ENCODE measurements at regions of chr11 and their contacts with region 1.

Region 1: DNA sequence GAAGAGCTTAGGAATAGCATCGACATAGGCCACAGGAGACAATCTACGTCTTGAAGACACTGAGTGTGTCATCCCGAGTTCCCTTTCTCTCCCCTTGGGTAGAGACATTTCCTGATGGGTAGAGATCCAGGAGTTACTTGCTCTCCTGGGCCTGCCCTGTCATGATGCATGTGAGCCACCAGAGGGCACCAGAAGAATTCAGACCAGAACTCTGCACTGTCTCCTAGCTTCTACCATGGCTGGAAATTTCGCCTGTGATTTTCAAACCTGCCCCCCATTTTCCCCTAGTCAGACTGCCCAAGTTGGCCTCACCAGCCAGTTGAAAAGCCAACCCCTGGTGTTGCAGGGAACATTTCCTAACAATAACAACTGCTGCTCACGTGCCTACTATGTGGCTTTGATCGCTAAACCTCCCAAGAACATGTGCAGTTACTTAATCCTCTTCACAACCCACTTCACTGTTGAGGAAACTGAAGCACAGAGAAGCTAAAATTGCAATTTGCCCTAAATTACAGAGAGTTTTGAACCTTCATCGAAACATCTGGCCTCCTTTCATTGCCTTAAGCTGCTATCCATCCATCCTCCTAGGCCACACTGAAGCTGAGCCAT is 47.2 kb downstream of the C11orf58 start:
- DNase-seq: peak in 4 of 5 donors; percentile 36 to 45 (median 44)
- H3K4me3 ChIP-seq: no peak overlapping the region
- H3K4me3 Mint-ChIP-seq: no peak overlapping the region
- H3K27ac ChIP-seq: no peak overlapping the region
- H3K27ac Mint-ChIP-seq: peak overlapping the region in 2 of 7 donors; percentile 3
- H3K4me1 ChIP-seq: no peaks in the 10 kb centered on the region
- H3K4me1 Mint-ChIP-seq: peaks cover 0 to 3% (median 0%) of the 10 kb centered on the region in 4 donors
- H3K27me3 ChIP-seq: no peaks in the 10 kb centered on the region
- H3K27me3 Mint-ChIP-seq: no peaks in the 10 kb centered on the region

Region 2: GRCh38 chr11:16286095-16286494 is 499.5 kb before region 1 on chr11:
- CTCF ChIA-PET with region 1: no interaction called
- POLR2A ChIA-PET with region 1: no interaction called
- intact Hi-C with region 1: no loop called
- DNase-seq: no peak
- H3K4me3 ChIP-seq: no peak overlapping the region
- H3K4me3 Mint-ChIP-seq: no peak overlapping the region
- H3K27ac ChIP-seq: no peak overlapping the region
- H3K27ac Mint-ChIP-seq: no peak overlapping the region
- H3K4me1 ChIP-seq: no peaks in the 10 kb centered on the region
- H3K4me1 Mint-ChIP-seq: no peaks in the 10 kb centered on the region
- H3K27me3 ChIP-seq: no peaks in the 10 kb centered on the region
- H3K27me3 Mint-ChIP-seq: no peaks in the 10 kb centered on the region

Region 3: GRCh38 chr11:16722581-16723344 is 62.9 kb before region 1 on chr11:
- CTCF ChIA-PET with region 1: no interaction called
- POLR2A ChIA-PET with region 1: no interaction called
- intact Hi-C with region 1: no loop called
- DNase-seq: no peak
- H3K4me3 ChIP-seq: no peak overlapping the region
- H3K4me3 Mint-ChIP-seq: no peak overlapping the region
- H3K27ac ChIP-seq: no peak overlapping the region
- H3K27ac Mint-ChIP-seq: no peak overlapping the region
- H3K4me1 ChIP-seq: no peaks in the 10 kb centered on the region
- H3K4me1 Mint-ChIP-seq: no peaks in the 10 kb centered on the region
- H3K27me3 ChIP-seq: no peaks in the 10 kb centered on the region
- H3K27me3 Mint-ChIP-seq: peaks cover 0 to under 1% of the 10 kb centered on the region in 2 donors

Region 4: GRCh38 chr11:16773981-16774935 is 11.4 kb before region 1 on chr11:
- CTCF ChIA-PET with region 1: interaction called, 16 read pairs
- POLR2A ChIA-PET with region 1: no interaction called
- intact Hi-C with region 1: no loop called
- DNase-seq: no peak
- H3K4me3 ChIP-seq: no peak overlapping the region
- H3K4me3 Mint-ChIP-seq: no peak overlapping the region
- H3K27ac ChIP-seq: no peak overlapping the region
- H3K27ac Mint-ChIP-seq: no peak overlapping the region
- H3K4me1 ChIP-seq: no peaks in the 10 kb centered on the region
- H3K4me1 Mint-ChIP-seq: no peaks in the 10 kb centered on the region
- H3K27me3 ChIP-seq: no peaks in the 10 kb centered on the region
- H3K27me3 Mint-ChIP-seq: no peaks in the 10 kb centered on the region

Region 5: DNA sequence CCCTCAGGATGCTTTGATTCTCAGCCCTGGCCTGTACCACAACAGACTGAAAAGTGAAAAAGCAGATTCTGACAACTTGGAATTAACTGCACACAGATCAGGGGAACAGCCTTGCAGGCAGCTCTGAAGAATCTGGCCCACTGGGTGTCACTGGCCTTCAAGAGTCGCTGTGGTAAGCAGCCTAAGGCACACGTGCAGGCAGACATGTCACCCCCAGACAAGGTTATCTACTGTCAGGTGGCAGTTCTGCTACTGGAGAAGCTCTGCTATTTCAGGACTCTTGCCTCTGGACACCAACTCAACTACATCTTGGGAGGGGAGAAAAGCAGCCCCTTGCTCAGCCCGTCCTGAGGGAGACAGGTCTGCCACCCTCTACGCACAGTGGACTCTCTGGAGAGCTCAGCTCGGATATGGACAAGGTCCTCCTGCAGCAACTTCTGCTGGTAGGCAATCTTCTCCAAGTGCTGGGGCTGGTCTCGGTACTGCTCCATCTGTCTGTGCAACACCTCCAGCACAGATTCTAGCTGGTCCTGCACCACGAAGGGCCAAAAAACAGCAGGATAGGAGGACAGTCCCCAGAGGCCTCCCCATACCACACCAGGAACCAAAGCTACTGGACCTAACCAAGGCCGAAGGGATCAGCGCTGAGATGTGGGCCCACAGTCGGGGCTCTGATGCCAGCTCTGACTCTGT is 15.8 kb after region 1 on chr11:
- CTCF ChIA-PET with region 1: interaction called, 25 read pairs
- POLR2A ChIA-PET with region 1: no interaction called
- intact Hi-C with region 1: no loop called
- DNase-seq: no peak
- H3K4me3 ChIP-seq: no peak overlapping the region
- H3K4me3 Mint-ChIP-seq: no peak overlapping the region
- H3K27ac ChIP-seq: no peak overlapping the region
- H3K27ac Mint-ChIP-seq: peak overlapping the region in 4 of 7 donors; percentile 14 to 77 (median 51)
- H3K4me1 ChIP-seq: peaks cover 16% of the 10 kb centered on the region
- H3K4me1 Mint-ChIP-seq: peaks cover 0 to 32% (median 13%) of the 10 kb centered on the region in 4 donors
- H3K27me3 ChIP-seq: no peaks in the 10 kb centered on the region
- H3K27me3 Mint-ChIP-seq: no peaks in the 10 kb centered on the region

Region 6: GRCh38 chr11:16809886-16810668 is 24.5 kb after region 1 on chr11:
- CTCF ChIA-PET with region 1: interaction called, 55 read pairs
- POLR2A ChIA-PET with region 1: no interaction called
- intact Hi-C with region 1: no loop called
- DNase-seq: no peak
- H3K4me3 ChIP-seq: no peak overlapping the region
- H3K4me3 Mint-ChIP-seq: no peak overlapping the region
- H3K27ac ChIP-seq: no peak overlapping the region
- H3K27ac Mint-ChIP-seq: peak overlapping the region in 2 of 7 donors; percentile 3 to 11
- H3K4me1 ChIP-seq: no peaks in the 10 kb centered on the region
- H3K4me1 Mint-ChIP-seq: peaks cover 1 to 16% (median 7%) of the 10 kb centered on the region in 4 donors
- H3K27me3 ChIP-seq: no peaks in the 10 kb centered on the region
- H3K27me3 Mint-ChIP-seq: no peaks in the 10 kb centered on the region

Region 7: GRCh38 chr11:16820324-16821092 is 34.9 kb after region 1 on chr11:
- CTCF ChIA-PET with region 1: interaction called, 17 read pairs
- POLR2A ChIA-PET with region 1: no interaction called
- intact Hi-C with region 1: no loop called
- DNase-seq: peak; percentile 6 to 59 (median 27)
- H3K4me3 ChIP-seq: no peak overlapping the region
- H3K4me3 Mint-ChIP-seq: peak overlapping the region in 1 of 8 donors; percentile 60
- H3K27ac ChIP-seq: no peak overlapping the region
- H3K27ac Mint-ChIP-seq: no peak overlapping the region
- H3K4me1 ChIP-seq: no peaks in the 10 kb centered on the region
- H3K4me1 Mint-ChIP-seq: peaks cover 5 to 7% (median 6%) of the 10 kb centered on the region in 4 donors
- H3K27me3 ChIP-seq: no peaks in the 10 kb centered on the region
- H3K27me3 Mint-ChIP-seq: no peaks in the 10 kb centered on the region

Region 8: DNA sequence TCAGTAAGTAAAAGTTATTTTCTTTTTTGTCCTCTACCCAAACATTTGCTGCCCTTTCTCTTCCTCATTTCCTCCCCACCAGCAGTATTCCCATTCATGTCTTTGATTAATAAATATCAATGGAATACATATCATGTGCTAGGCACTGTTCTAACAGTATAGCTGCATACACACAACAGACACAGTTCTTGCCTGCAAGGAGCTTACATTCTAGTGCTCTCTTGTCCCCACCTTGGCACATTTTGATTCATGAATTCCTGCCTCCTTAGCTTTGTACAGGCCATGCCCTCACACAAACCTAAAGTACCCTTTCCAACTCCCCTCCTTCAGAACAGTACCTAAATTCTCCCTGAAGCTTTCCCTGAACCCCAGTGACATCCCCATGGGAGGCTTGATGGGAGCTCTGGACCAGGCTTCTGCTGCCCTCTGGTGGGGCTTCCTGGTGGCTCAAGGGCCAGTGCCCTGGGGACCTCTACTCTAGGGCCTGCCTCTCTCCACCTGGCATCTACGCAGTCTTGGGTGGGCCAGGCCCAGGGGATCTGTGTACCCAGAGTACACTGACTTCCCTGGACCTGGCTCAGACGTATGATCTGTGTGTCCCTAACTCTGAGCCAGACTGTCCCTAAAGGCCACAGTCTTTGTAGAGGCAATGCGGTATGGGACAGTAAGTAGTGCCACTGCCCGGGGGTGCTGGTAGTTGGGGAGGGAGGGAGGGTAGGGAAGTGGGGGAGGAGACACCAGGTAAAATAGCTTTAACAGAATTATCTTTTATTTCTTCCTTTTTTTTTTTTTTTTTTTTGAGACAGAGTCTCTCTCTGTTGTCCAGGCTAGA is 277.8 kb after region 1 on chr11:
- CTCF ChIA-PET with region 1: interaction called, 10 read pairs
- POLR2A ChIA-PET with region 1: no interaction called
- intact Hi-C with region 1: loop called (anchors 5 kb)
- DNase-seq: peak; percentile 11 to 38 (median 20)
- H3K4me3 ChIP-seq: no peak overlapping the region
- H3K4me3 Mint-ChIP-seq: no peak overlapping the region
- H3K27ac ChIP-seq: no peak overlapping the region
- H3K27ac Mint-ChIP-seq: peak overlapping the region in 1 of 7 donors; percentile 82
- H3K4me1 ChIP-seq: no peaks in the 10 kb centered on the region
- H3K4me1 Mint-ChIP-seq: no peaks in the 10 kb centered on the region
- H3K27me3 ChIP-seq: no peaks in the 10 kb centered on the region
- H3K27me3 Mint-ChIP-seq: no peaks in the 10 kb centered on the region

Region 9: DNA sequence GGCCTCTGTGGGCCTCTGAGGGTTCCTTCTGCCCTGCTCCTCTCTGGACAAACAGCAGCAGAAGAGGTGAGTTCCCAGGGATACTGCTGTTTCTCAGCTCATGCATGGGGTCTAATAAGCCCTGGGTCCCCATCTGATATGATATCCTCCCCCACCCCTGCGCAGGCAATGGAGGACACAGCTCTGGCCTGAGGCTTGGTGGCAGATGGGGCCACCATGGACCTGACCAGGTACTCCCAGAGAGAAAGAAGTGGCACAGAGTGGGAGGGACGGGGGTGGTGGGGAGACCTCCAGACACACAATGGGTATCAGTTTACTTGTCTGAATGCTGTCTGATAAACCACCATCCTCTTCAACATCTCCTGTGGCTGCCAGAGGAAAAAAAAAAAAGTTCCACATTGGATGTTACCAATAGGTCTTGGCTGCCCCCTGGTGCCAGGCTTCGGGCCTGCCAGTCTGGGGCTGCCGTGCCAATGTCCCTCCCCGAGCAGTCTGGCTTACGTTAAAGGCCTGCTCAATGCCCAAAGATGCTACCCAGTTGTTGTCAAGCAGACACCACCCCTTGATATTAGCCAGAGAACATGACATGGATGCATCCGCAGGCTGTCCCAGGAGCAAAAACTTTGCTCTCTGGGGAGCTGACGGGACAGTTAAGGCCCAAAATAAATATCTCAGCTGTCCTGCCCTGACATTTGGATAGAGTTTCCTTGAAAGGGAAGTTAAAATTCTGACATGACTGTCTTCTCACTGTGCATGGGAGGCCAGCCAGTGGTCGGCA is 718.9 kb after region 1 on chr11:
- CTCF ChIA-PET with region 1: interaction called, 3 read pairs
- POLR2A ChIA-PET with region 1: no interaction called
- intact Hi-C with region 1: loop called (anchors 10 kb)
- DNase-seq: peak; percentile 64 to 73 (median 71)
- H3K4me3 ChIP-seq: no peak overlapping the region
- H3K4me3 Mint-ChIP-seq: no peak overlapping the region
- H3K27ac ChIP-seq: no peak overlapping the region
- H3K27ac Mint-ChIP-seq: peak overlapping the region in 1 of 7 donors; percentile 47
- H3K4me1 ChIP-seq: no peaks in the 10 kb centered on the region
- H3K4me1 Mint-ChIP-seq: peaks cover 0 to 2% (median 0%) of the 10 kb centered on the region in 4 donors
- H3K27me3 ChIP-seq: no peaks in the 10 kb centered on the region
- H3K27me3 Mint-ChIP-seq: peaks cover 3 to 6% of the 10 kb centered on the region in 2 donors

Measured in CD4-positive, alpha-beta memory T cell (primary cell).